ENCODE measurements at regions of chr5 and their contacts with region 1.

Region 1: DNA sequence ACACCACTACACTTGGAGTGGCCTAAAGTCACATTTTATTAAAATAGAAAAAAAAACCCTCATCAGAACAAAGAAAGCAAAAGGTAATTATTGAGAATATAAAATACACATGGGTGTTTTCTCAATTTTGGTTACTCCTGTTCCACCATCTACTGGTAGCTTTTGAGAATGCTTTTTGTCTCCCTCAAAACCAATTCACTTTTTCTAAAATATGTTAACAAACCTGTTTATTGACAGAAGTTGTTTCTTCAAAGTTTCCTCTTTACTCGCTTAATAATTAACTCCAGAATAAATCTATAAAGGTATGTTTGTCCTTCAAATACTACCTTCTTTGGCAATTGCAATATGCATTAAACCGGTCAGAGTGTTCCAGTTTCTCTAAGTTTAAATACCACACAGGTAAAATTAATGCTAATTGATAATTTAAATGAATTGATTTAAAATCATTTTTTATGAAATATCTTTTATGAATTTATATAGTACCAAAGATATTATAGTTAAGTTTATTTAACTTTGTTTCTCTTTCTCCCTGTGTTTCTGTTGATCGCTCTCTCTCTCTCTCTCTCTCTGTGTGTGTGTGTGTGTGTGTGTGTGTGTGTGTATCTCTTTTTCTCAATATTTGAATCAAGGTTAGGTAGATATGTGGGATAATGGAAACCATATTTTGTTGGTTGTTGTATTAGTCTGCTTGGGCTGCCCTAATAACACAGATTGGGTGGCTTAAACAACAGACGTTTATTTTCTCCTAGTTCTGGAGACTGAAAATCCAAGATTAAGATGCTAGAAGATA is 487.4 kb downstream of the PRDM9 start:
- DNase-seq: peak; percentile 53
- ATAC-seq: no peak; the same call in 1 of the 2 replicates
- H3K4me3 ChIP-seq: no peak overlapping the region
- H3K27ac ChIP-seq: no peak overlapping the region
- H3K4me1 ChIP-seq: no peaks in the 10 kb centered on the region
- H3K27me3 ChIP-seq: no peaks in the 10 kb centered on the region
- CTCF ChIP-seq: peak; percentile 71

Region 2: GRCh38 chr5:23776684-23777083 is 218.1 kb before region 1 on chr5:
- CTCF ChIA-PET with region 1: no interaction called
- POLR2A ChIA-PET with region 1: no interaction called
- intact Hi-C with region 1: no loop called
- DNase-seq: no peak
- ATAC-seq: no peak
- H3K4me3 ChIP-seq: no peak overlapping the region
- H3K27ac ChIP-seq: no peak overlapping the region
- H3K4me1 ChIP-seq: no peaks in the 10 kb centered on the region
- H3K27me3 ChIP-seq: no peaks in the 10 kb centered on the region
- CTCF ChIP-seq: no peak

Region 3: DNA sequence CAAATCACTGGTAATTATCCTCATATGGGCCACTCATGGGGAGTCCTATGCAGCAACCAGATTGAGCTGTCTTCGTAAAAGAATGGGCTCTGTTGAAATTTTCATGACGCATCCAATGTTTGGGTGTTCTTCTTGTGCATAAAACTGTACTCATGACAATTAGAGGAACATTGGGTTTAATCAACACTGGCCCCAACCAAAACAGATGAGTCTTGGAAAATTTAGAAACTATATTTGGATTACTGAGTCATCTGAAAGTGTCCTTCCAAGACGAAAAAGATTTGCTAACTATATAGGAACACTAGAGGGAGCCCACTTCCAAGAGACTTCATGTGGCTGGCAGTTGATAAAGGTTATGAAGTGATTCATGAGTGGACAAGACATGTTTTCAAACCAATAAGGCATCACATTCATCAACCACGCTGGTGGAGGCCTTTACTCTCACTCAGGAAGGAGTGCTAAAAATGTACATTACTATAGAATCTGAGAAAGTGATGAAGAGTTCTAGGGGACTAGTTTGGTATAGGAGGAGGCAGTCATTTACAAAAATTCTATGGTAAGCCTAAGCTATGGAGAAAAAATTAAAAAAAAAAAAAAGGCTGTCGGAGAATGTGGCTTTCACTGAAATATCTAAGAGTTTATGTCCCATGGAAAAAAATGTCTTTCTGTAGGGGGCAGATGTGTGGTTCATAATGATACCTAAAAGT is 173.9 kb before region 1 on chr5:
- CTCF ChIA-PET with region 1: no interaction called
- POLR2A ChIA-PET with region 1: no interaction called
- intact Hi-C with region 1: loop called (anchors 1 kb)
- DNase-seq: peak; percentile 84
- ATAC-seq: peak; percentile 85
- H3K4me3 ChIP-seq: no peak overlapping the region
- H3K27ac ChIP-seq: no peak overlapping the region
- H3K4me1 ChIP-seq: no peaks in the 10 kb centered on the region; the same call in 1 of the 2 replicates
- H3K27me3 ChIP-seq: no peaks in the 10 kb centered on the region
- CTCF ChIP-seq: peak; percentile 87

Region 4: DNA sequence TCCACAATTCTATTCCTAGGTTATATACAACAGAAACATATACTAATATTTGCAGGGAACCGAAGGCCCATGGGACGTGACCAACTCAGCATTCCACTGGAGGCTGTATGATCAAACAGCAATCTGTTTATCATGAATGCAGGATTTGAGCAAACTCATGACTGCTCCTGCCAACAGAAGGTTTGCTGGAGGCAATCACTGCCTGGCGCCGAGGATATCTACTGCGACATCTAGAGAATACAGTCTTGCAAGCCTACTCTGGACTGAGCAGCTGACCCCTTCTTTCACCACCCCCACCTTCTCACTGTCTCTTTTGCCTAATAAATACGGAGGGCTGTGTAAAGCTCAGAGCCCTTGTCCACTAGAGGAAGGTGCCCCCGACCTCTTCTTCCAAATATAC is 740.5 kb after region 1 on chr5:
- CTCF ChIA-PET with region 1: no interaction called
- POLR2A ChIA-PET with region 1: no interaction called
- intact Hi-C with region 1: no loop called
- DNase-seq: no peak
- ATAC-seq: no peak
- H3K4me3 ChIP-seq: no peak overlapping the region
- H3K27ac ChIP-seq: no peak overlapping the region
- H3K4me1 ChIP-seq: no peaks in the 10 kb centered on the region
- H3K27me3 ChIP-seq: no peaks in the 10 kb centered on the region
- CTCF ChIP-seq: no peak